ENCODE measurements at regions of chr9 and their contacts with region 1.

Region 1: DNA sequence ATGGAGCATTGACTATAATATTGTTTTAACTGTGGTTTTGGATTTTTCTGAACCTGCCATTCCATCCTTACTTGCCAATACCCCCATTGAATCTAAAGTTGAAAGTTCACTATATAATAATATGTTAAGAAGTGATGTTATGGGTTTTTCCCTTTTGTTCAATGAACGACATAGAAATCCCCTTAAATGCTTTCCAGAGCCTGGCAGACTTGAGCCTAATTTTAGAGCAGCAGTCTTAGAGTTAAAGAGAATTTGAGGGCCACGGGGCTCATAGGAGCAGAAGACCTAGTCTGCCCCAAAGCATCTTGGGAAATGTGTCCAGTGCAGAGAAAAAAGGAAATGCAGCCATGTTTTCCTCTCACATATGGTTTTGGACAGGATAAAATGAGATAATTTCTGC is 146.1 kb upstream of the SLC44A1 start:
- DNase-seq: no peak

Region 2: DNA sequence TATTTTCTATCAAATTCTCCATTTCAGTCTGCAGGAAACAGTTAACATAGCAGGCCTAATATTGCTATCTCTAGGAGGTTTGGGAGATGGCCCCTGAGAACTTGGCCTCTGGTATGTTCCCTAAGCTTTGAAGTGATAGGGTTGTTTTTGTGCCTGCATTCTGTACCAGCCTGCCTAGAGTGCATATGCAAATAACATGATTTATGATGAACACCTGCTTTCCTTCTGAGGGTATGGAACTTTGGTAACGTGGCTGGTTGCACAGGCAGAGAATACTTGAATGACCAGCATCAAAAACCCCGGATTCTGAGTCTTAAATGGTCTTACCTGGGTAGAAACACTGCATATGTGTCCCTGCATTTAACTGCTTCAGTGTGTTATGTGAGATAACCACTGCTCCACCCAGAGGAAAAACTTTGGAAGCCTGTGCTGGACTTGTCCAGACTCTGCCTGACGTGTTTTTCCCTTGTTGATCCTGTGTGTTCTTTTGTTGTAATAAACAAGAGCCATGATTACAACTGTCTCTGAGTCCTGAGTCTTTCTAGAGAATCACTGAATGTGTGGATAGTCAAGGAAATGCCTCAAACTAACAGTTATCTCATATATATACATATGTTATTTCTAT is 59.1 kb before region 1 on chr9:
- intact Hi-C with region 1: no loop called
- DNase-seq: no peak

Region 3: GRCh38 chr9:105131981-105132380 is 33.6 kb after region 1 on chr9:
- intact Hi-C with region 1: loop called in 1 of 2 experiments (anchors 1 kb)
- DNase-seq: no peak

Region 4: GRCh38 chr9:105296889-105297288 is 198.5 kb after region 1 on chr9:
- intact Hi-C with region 1: no loop called
- DNase-seq: no peak

Measured in posterior vena cava (tissue), 2 donors.